A673 (cell line): ENCODE measurements at regions of chr1 and their contacts with region 1.

Region 1: GRCh38 chr1:185720633-185721272 is 13.4 kb upstream of the HMCN1 start:
- DNase-seq: peak; percentile 88
- H3K4me3 ChIP-seq: no peak overlapping the region
- H3K27ac ChIP-seq: peak overlapping the region; percentile 100
- H3K4me1 ChIP-seq: peaks cover 64% of the 10 kb centered on the region
- H3K27me3 ChIP-seq: no peaks in the 10 kb centered on the region
- CTCF ChIP-seq: peak; percentile 81

Region 2: DNA sequence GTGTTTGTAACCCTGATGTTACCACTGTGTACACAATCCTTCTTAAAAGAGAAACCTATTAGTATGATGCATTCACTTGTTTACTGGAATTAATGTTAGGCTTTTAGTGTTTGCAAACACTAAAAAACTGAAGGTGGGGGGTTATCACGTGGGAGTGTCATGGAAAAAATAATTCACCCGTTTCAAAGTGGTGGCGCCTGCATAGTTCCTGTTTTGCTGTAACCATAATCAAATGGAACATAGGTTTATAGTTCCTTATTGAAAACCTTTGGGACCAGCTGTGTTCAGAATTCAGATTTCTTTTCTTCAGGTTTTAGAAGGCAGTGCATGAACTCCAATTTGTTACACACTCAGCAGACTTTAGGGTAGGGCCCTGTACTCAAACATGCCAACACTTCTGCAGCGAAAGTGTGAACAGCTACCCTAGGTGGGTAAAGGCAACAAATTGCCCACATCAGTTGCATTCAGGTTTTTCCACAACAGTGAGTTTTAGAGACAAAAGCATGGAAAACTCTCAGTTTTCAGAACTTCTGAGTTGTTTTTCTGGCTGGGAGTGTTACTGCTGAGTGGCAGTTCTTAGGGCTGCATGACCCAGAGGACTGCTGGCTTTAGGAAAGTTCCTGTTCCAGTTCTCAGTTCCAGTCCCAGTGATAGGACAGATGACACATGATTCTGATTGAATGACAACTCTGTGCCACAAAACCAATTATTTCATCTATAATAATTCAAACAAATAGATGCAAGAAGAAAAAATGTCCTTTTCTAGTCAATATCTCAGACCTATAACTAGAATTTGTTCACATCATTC is 374.6 kb before region 1 on chr1:
- CTCF ChIA-PET with region 1: no interaction called
- POLR2A ChIA-PET with region 1: no interaction called
- intact Hi-C with region 1: no loop called
- DNase-seq: no peak
- H3K4me3 ChIP-seq: no peak overlapping the region
- H3K27ac ChIP-seq: no peak overlapping the region
- H3K4me1 ChIP-seq: peaks cover under 1% of the 10 kb centered on the region
- H3K27me3 ChIP-seq: no peaks in the 10 kb centered on the region
- CTCF ChIP-seq: no peak

Region 3: DNA sequence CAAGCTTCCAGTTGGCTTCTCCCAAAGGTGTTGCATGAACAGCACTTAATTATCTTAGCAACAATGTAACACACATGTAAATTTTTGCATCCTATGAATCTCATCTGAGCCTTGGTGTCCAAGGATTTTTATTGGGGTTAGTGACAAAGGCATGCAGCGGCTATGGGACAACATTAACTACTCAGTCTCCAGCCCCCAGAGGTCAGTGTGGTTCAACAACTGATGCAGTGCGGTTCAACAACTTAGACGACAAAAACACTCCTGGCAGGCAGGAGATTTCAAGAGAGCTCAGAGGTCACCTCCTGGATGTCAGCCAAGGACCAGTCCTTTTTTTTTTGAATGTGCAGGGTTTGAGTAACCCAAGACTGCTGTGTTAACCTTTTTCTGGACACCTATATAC is 64.1 kb before region 1 on chr1:
- CTCF ChIA-PET with region 1: no interaction called
- POLR2A ChIA-PET with region 1: no interaction called
- intact Hi-C with region 1: loop called (anchors 1 kb)
- DNase-seq: no peak
- H3K4me3 ChIP-seq: no peak overlapping the region
- H3K27ac ChIP-seq: peak overlapping the region; percentile 55
- H3K4me1 ChIP-seq: peaks cover 33% of the 10 kb centered on the region
- H3K27me3 ChIP-seq: no peaks in the 10 kb centered on the region
- CTCF ChIP-seq: no peak

Region 4: GRCh38 chr1:185686821-185687778 is 33.7 kb before region 1 on chr1:
- CTCF ChIA-PET with region 1: no interaction called
- POLR2A ChIA-PET with region 1: no interaction called
- intact Hi-C with region 1: loop called (anchors 1 kb)
- DNase-seq: peak; percentile 90
- H3K4me3 ChIP-seq: no peak overlapping the region
- H3K27ac ChIP-seq: peak overlapping the region; percentile 100
- H3K4me1 ChIP-seq: peaks cover 66% of the 10 kb centered on the region
- H3K27me3 ChIP-seq: no peaks in the 10 kb centered on the region
- CTCF ChIP-seq: no peak

Region 5: GRCh38 chr1:185733818-185734771 is 13.3 kb after region 1 on chr1 and contains the start of gene HMCN1:
- CTCF ChIA-PET with region 1: interaction called, 10 read pairs
- POLR2A ChIA-PET with region 1: no interaction called
- intact Hi-C with region 1: no loop called
- DNase-seq: peak; percentile 94
- H3K4me3 ChIP-seq: peak within 1 kb of the TSS; percentile 72
- H3K27ac ChIP-seq: peak within 1 kb of the TSS; percentile 88
- H3K4me1 ChIP-seq: peaks cover 24% of the 10 kb centered on the region
- H3K27me3 ChIP-seq: no peaks in the 10 kb centered on the region
- CTCF ChIP-seq: peak; percentile 60
- total RNA-seq, gene HMCN1: 134 and 182 TPM in 2 replicates

Region 6: GRCh38 chr1:186059777-186060176 is 339.0 kb after region 1 on chr1:
- CTCF ChIA-PET with region 1: no interaction called
- POLR2A ChIA-PET with region 1: interaction called, 3 read pairs
- intact Hi-C with region 1: loop called (anchors 1 kb)
- DNase-seq: no peak
- H3K4me3 ChIP-seq: no peak overlapping the region
- H3K27ac ChIP-seq: peak overlapping the region; percentile 12
- H3K4me1 ChIP-seq: peaks cover 69% of the 10 kb centered on the region
- H3K27me3 ChIP-seq: no peaks in the 10 kb centered on the region
- CTCF ChIP-seq: no peak

Region 7: DNA sequence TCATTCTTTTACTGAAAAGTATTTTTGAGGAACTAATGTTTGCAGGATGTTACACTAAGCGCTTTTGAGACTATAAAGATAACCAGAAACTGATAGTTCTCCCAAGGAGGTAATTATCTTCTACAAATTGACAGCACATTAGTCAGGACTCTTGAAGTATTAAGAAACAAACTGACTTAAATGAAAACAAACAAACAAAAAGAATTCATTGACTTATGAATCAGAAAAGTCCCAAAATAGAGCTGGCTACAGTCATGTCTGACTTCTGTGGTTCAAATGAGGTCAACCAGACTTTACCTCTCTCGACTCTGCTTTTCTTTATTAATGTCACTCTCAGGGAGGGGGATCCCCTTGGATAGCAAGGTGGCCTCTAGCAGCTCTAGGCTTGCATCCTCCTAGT is 357.5 kb after region 1 on chr1:
- CTCF ChIA-PET with region 1: no interaction called
- POLR2A ChIA-PET with region 1: no interaction called
- intact Hi-C with region 1: loop called (anchors 5 kb)
- DNase-seq: no peak
- H3K4me3 ChIP-seq: no peak overlapping the region
- H3K27ac ChIP-seq: no peak overlapping the region
- H3K4me1 ChIP-seq: peaks cover 45% of the 10 kb centered on the region
- H3K27me3 ChIP-seq: no peaks in the 10 kb centered on the region
- CTCF ChIP-seq: no peak